ENCODE measurements at regions of chr7 and their contacts with region 1.

Region 1: DNA sequence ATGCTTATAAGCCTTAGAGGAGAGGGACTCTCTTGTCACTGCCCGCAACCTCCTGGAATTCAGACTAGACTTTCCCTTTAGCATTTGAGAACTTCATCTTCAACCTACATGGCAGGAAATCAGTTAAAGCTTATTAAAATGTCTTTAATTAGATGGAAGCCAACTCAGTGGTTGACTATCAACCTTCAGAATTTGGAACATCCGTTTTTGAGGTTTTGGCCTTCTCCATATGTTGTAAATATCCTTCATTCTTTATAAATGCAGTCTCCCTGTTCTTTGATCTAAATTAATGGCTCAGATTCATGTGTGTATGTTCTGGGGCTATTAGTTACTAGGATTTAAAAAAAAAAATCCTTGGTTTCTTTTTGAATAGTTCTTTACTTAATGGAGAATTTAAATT is 85.0 kb downstream of the ANKRD61 start:
- DNase-seq: no peak
- H3K4me3 ChIP-seq: no peak overlapping the region
- H3K27ac ChIP-seq: no peak overlapping the region
- H3K4me1 ChIP-seq: no peaks in the 10 kb centered on the region
- CTCF ChIP-seq: no peak

Region 2: DNA sequence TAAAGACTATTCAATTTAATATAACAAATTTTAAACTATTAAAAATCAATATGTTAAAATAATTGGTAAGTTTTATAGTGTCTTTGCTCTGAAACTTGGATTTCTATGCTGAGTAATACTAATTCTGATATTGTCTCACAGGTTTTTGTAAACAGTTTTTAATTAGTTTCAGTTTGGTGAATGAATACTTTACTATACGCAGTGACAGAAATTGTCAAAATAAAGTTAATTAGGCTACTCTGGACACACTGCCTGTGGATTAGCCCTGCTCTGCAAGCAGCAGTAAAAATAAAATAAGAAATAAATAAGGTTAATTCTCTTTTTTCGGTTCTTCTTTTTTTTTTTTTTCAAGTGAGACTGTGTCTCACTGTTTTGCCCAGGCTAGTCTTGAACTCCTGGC is 20.3 kb after region 1 on chr7:
- CTCF ChIA-PET with region 1: no interaction called
- POLR2A ChIA-PET with region 1: interaction called, 10 read pairs
- intact Hi-C with region 1: no loop called
- DNase-seq: no peak
- H3K4me3 ChIP-seq: no peak overlapping the region
- H3K27ac ChIP-seq: no peak overlapping the region
- H3K4me1 ChIP-seq: no peaks in the 10 kb centered on the region
- CTCF ChIP-seq: no peak

Region 3: DNA sequence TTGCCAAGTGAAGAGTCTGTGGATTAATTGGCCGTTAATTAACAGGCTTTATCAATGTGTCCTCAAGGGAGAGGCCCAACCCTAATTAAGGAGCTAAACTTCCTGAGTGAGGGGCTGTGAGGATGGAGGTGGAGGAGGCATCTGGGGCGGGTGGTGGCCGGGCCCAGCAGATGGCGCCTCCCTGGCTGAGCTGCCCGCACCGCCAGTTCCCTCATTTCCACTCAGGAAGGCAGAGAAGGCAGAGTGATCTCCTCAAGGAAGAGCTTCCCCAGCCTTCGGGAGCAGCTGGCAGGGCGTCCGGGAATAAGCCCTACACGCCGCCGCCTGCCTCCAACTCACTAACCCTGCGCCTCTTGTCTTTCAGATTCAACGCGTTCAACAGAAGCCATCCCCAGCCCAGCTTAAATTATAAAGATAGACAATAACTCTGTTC is 44.0 kb after region 1 on chr7:
- CTCF ChIA-PET with region 1: no interaction called
- POLR2A ChIA-PET with region 1: no interaction called
- intact Hi-C with region 1: no loop called
- DNase-seq: no peak
- H3K4me3 ChIP-seq: no peak overlapping the region
- H3K27ac ChIP-seq: no peak overlapping the region
- H3K4me1 ChIP-seq: peaks cover 6% of the 10 kb centered on the region
- CTCF ChIP-seq: peak; percentile 60

Measured in OCI-LY7 (cell line).